ENCODE measurements at regions of chr1 and their contacts with region 1.

Region 1: GRCh38 chr1:226882631-226883409 is 12.4 kb downstream of the PSEN2 start:
- DNase-seq: peak; percentile 49
- H3K4me3 Mint-ChIP-seq: peak overlapping the region; percentile 56
- H3K27ac Mint-ChIP-seq: peak overlapping the region; percentile 92
- H3K4me1 Mint-ChIP-seq: peaks cover 49% of the 10 kb centered on the region
- H3K27me3 Mint-ChIP-seq: no peaks in the 10 kb centered on the region

Region 2: GRCh38 chr1:226870401-226871279 is 12.2 kb before region 1 on chr1 and contains the start of gene PSEN2:
- CTCF ChIA-PET with region 1: interaction called, 4 read pairs
- POLR2A ChIA-PET with region 1: interaction called, 6 read pairs
- intact Hi-C with region 1: loop called (anchors 1 kb)
- DNase-seq: peak; percentile 77
- H3K4me3 Mint-ChIP-seq: peak within 1 kb of the TSS; percentile 68
- H3K27ac Mint-ChIP-seq: no peak within 1 kb of the TSS
- H3K4me1 Mint-ChIP-seq: peaks cover 12% of the 10 kb centered on the region
- H3K27me3 Mint-ChIP-seq: peaks cover 23% of the 10 kb centered on the region
- total RNA-seq, gene PSEN2: 4.5 to 5.3 TPM

Measured in activated CD4-positive, alpha-beta memory T cell treated with anti-CD3 and anti-CD28 coated beads for 36 hours (primary cell).